Posterior cingulate gyrus (tissue), 11 donors: ENCODE measurements at regions of chr20 and their contacts with region 1.

Region 1: GRCh38 chr20:18632196-18633009 is 44.5 kb downstream of the DTD1 start:
- DNase-seq: peak; percentile 61 to 97 (median 81)

Region 2: GRCh38 chr20:18793625-18794427 is 161.4 kb after region 1 on chr20:
- intact Hi-C with region 1: no loop called
- DNase-seq: peak; percentile 84 to 98 (median 92)

Region 3: GRCh38 chr20:19205977-19206396 is 573.6 kb after region 1 on chr20:
- intact Hi-C with region 1: loop called (anchors 10 kb)
- DNase-seq: peak; percentile 29 to 94 (median 72)